Activated naive CD4-positive, alpha-beta T cell treated with anti-CD3 and anti-CD28 coated beads for 36 hours (primary cell): ENCODE measurements at regions of chr10 and their contacts with region 1.

Region 1: GRCh38 chr10:92087750-92088395 is 164.3 kb downstream of the BTAF1 start:
- DNase-seq: peak; percentile 79
- H3K4me3 Mint-ChIP-seq: no peak overlapping the region
- H3K27ac Mint-ChIP-seq: no peak overlapping the region
- H3K4me1 Mint-ChIP-seq: peaks cover 6% of the 10 kb centered on the region
- H3K27me3 Mint-ChIP-seq: no peaks in the 10 kb centered on the region

Region 2: GRCh38 chr10:92432596-92432995 is 344.7 kb after region 1 on chr10:
- CTCF ChIA-PET with region 1: no interaction called
- intact Hi-C with region 1: loop called (anchors 1 kb)
- DNase-seq: no peak
- H3K4me3 Mint-ChIP-seq: no peak overlapping the region
- H3K27ac Mint-ChIP-seq: no peak overlapping the region
- H3K4me1 Mint-ChIP-seq: no peaks in the 10 kb centered on the region
- H3K27me3 Mint-ChIP-seq: no peaks in the 10 kb centered on the region

Region 3: GRCh38 chr10:92517034-92517655 is 429.3 kb after region 1 on chr10:
- CTCF ChIA-PET with region 1: no interaction called
- intact Hi-C with region 1: loop called (anchors 10 kb)
- DNase-seq: peak; percentile 78
- H3K4me3 Mint-ChIP-seq: no peak overlapping the region
- H3K27ac Mint-ChIP-seq: no peak overlapping the region
- H3K4me1 Mint-ChIP-seq: peaks cover 6% of the 10 kb centered on the region
- H3K27me3 Mint-ChIP-seq: no peaks in the 10 kb centered on the region